ENCODE measurements at regions of chr11 and their contacts with region 1.

Region 1: DNA sequence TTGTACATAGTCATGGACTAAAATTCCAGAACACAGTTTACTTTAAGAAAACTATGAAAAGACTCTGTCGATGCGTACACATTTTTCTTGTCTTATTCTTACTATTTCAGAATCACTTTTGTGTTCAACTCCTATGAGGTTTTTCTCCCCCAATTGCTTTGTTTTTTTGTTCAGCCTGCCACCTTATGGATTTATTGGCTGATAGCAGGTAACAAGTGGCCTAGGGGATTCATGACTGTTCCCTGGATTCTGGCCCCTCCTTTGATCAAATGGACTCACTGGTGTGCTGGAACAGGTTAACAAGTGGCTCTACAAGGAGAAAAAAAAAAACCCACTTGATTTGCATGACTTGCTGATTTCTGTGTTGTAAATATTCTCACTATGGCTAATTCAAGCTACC is 10.6 kb downstream of the MMP20 start:
- DNase-seq: no peak
- ATAC-seq: no peak
- H3K4me3 Mint-ChIP-seq: no peak overlapping the region
- H3K27ac Mint-ChIP-seq: no peak overlapping the region
- H3K4me1 Mint-ChIP-seq: peaks cover 11% of the 10 kb centered on the region
- H3K27me3 Mint-ChIP-seq: no peaks in the 10 kb centered on the region

Region 2: DNA sequence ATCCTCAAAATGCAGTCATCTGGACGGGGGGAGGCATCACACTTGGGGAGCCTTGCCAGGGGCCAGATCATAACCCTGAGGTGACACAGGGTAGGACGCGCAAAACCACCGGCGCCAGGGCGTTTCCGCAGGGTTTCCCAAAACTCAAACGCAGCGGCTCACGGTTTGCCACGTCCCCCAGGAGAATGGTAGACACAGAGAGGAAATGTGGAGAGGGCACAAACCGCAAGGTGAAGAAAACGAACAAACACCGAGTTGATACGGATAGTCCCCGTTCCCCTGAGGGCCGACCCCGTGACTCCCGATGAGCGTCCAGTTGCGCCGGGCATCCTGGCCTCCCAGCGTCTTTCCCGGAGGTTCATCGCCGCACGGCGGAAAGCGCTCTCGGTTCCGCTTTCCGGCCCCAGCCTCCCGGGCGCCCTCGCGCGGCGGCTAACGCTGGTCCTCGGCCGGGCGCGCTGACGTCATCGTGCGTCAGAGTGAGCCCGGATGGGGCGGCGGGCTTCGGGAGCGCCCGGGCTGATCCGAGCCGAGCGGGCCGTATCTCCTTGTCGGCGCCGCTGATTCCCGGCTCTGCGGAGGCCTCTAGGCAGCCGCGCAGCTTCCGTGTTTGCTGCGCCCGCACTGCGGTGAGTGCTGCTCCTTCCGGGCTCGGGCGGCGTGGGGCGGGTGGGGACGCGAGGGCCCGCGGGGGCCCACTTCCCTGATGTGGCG is 267.6 kb before region 1 on chr11 and contains the start of gene BIRC2:
- CTCF ChIA-PET with region 1: interaction called, 45 read pairs
- DNase-seq: peak; percentile 95
- ATAC-seq: peak; percentile 95
- H3K4me3 Mint-ChIP-seq: peak within 1 kb of the TSS; percentile 88
- H3K27ac Mint-ChIP-seq: peak within 1 kb of the TSS; percentile 97
- H3K4me1 Mint-ChIP-seq: peaks cover 31% of the 10 kb centered on the region
- H3K27me3 Mint-ChIP-seq: no peaks in the 10 kb centered on the region
- total RNA-seq, gene BIRC2: 30.7 to 30.9 TPM

Region 3: DNA sequence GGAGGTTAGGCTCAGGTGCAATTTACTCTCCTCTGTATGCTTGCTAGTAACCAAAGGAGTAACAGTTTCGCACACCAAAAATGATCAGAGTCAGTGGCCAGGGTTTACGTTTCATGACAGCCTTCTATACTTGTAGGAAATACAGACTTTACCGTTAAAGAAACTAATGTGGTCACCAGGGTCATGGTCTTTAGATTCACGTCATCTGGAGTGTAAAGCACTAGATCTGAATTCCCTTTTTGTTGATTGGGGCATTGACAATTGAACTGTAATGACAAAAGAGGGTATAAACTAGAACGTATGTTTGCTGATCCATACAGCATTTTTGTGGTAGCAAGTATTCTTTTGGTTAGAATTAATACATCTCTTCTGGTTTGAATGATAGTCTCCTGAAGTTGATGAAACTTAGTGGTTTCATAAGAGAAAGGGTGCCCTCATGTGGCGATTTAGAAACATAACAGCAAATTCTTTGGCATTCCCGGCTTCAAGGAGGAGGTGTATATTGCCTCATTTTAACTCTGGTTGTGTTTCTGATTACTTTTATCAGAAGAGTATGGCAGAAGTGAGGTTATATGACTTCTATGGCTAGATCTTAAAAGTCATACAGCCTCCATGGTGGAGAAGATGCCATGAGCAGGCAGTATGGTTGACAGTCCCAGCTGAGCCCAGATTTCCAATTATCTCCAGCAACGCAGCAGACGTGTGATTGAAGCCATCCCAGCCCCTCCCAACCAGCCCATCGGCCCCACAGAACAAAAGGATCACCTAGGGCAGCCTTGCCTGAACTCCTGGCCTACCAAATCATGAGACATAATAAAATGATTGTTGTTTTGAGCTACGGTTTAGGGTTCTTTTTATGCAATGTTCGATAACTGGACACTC is 119.1 kb before region 1 on chr11:
- CTCF ChIA-PET with region 1: interaction called, 18 read pairs
- DNase-seq: peak; percentile 45
- ATAC-seq: peak; percentile 78
- H3K4me3 Mint-ChIP-seq: peak overlapping the region; percentile 15
- H3K27ac Mint-ChIP-seq: peak overlapping the region; percentile 39
- H3K4me1 Mint-ChIP-seq: peaks cover 16% of the 10 kb centered on the region
- H3K27me3 Mint-ChIP-seq: peaks cover 22% of the 10 kb centered on the region

Region 4: DNA sequence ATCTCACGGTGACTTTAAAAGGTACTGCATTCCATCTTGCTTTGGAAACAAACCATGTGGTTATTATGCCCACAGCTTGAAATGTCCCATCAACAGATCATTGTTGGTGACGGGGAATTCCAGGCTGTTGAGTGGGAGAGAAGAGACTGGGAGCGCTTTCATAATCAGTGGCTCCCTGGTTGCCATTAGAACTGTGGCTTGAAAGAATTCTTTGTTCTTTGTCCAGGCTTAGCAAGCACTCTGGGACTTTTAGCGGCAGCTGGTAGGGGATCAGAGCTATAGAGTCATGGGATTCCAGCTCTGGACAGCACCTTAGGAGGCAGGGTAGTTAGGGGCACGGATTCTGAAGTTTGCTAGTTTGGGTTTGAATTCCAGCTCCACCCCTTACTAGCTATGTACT is 11.4 kb before region 1 on chr11:
- CTCF ChIA-PET with region 1: interaction called, 14 read pairs
- DNase-seq: no peak
- ATAC-seq: no peak
- H3K4me3 Mint-ChIP-seq: no peak overlapping the region
- H3K27ac Mint-ChIP-seq: no peak overlapping the region
- H3K4me1 Mint-ChIP-seq: peaks cover 21% of the 10 kb centered on the region
- H3K27me3 Mint-ChIP-seq: no peaks in the 10 kb centered on the region

Region 5: DNA sequence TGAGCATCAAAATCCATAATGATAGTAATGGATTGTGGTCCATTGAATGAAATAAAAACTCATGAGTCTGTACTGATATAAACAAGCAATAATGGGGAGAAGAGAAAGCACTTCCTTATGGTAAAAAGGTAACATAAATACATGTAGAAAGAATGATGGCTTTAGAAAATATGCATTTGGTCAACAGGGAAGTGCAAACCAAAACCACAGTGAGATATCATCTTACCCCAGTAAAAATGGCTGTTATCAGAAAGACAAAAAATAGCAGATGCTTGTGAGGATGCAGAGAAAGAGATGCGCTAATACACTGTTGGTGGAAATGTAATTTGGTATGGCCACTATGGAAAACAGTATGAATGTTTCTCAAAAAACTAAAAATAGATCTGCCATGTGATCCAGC is 17.5 kb after region 1 on chr11:
- CTCF ChIA-PET with region 1: no interaction called
- DNase-seq: no peak
- ATAC-seq: no peak
- H3K4me3 Mint-ChIP-seq: no peak overlapping the region
- H3K27ac Mint-ChIP-seq: no peak overlapping the region
- H3K4me1 Mint-ChIP-seq: peaks cover 2% of the 10 kb centered on the region
- H3K27me3 Mint-ChIP-seq: peaks cover 9% of the 10 kb centered on the region

Region 6: DNA sequence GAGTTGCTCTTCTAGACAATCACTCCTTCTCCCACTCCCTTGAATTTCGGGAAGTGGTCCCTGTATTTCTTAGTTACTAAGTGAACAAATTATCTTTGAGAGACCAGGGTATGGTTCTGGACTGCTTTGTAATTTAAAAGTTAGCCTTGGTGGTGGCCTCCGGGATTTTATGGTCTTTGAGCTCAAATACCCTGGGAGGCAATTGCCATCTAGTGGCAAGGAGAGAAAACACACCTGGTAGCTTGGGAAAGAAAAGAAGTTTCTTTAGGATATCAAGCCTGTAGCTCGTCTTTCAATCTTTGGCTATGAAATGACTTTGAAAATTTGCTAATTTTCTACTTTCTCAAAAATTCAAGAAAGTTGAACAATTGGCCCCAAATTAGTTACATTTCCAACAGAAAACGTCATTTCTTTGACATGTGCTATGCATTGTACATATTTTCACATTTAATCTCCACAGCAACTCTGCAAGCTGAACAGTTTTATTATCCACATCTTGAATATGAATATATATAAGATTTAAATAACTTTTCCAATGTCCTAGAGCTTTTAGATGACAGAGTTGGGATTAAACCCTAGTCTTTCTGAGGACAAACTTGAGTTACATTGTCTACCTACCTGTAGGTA is 52.0 kb after region 1 on chr11:
- CTCF ChIA-PET with region 1: interaction called, 19 read pairs
- DNase-seq: no peak
- ATAC-seq: peak; percentile 49
- H3K4me3 Mint-ChIP-seq: no peak overlapping the region
- H3K27ac Mint-ChIP-seq: no peak overlapping the region
- H3K4me1 Mint-ChIP-seq: no peaks in the 10 kb centered on the region
- H3K27me3 Mint-ChIP-seq: peaks cover 2% of the 10 kb centered on the region

Measured in activated CD8-positive, alpha-beta memory T cell treated with anti-CD3 and anti-CD28 coated beads, Interleukin-2, amount 10 ng/mL, durations not matched to agents 7 days and 5 days (primary cell).